ENCODE measurements at regions of chr11 and their contacts with region 1.

Region 1: GRCh38 chr11:41031551-41032060 is 427.8 kb downstream of the LRRC4C start:
- DNase-seq: no peak
- ATAC-seq: no peak

Region 2: DNA sequence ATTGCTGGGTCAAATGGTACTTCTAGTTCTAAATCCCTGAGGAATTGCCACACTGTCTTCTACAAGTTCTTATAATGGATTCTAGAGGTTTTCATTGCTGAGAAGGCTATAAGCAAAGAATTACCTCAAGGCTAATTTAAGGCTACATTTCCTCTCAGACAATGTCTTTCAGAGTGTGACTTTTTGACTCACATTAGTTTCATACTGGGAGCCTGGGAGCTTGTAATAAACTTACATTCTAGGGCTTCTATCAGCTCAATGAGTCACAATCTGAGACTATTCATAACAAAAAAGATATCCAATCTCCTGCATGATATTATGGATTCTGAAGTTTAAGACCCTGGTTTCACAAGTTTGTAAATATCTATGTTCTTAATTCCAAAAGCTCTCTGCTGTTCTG is 19.2 kb after region 1 on chr11:
- intact Hi-C with region 1: loop called (anchors 1 kb)
- DNase-seq: no peak
- ATAC-seq: no peak

Region 3: DNA sequence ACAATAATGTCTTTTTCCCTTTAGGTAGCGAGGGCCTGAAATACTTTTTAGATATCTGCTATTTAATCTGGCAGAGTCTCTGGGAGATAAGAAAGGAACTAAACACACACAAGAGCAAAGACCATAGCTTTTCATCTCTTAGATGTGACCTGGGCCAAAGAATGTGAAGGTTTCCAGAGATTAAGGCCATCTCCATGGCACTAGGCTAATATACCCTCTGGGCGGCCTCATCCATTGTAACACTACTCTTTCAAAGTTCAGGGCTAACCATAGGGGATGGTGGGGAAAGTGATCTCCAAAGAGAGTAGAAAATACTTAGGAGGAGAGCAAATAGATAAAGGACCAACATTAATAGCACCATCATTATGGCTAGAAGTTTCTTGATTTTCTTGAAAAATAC is 101.4 kb after region 1 on chr11:
- intact Hi-C with region 1: no loop called
- DNase-seq: no peak
- ATAC-seq: no peak